ENCODE measurements at regions of chr16 and their contacts with region 1.

Region 1: DNA sequence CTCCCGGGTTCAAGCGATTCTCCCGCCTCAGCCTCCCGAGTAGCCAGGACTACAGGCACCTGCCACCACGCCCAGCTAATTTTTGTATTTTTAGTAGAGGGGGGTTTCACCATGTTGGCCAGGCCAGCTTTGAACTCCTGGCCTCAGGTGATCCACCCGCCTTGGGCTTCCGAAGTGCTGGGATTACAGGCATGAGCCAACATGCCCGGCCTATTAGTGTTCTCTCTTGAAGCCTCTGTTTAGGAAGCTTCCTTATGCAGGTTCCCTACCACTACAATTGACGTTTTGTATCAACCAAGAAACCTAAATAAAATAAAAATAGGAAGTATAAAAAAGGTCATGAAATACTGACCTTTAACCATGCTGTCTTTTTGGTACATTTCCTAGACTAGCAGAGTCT is 16.0 kb downstream of the CHST5 start:
- DNase-seq: no peak

Region 2: GRCh38 chr16:75372236-75372856 is 147.5 kb before region 1 on chr16:
- CTCF ChIA-PET with region 1: no interaction called
- POLR2A ChIA-PET with region 1: no interaction called
- DNase-seq: no peak

Region 3: DNA sequence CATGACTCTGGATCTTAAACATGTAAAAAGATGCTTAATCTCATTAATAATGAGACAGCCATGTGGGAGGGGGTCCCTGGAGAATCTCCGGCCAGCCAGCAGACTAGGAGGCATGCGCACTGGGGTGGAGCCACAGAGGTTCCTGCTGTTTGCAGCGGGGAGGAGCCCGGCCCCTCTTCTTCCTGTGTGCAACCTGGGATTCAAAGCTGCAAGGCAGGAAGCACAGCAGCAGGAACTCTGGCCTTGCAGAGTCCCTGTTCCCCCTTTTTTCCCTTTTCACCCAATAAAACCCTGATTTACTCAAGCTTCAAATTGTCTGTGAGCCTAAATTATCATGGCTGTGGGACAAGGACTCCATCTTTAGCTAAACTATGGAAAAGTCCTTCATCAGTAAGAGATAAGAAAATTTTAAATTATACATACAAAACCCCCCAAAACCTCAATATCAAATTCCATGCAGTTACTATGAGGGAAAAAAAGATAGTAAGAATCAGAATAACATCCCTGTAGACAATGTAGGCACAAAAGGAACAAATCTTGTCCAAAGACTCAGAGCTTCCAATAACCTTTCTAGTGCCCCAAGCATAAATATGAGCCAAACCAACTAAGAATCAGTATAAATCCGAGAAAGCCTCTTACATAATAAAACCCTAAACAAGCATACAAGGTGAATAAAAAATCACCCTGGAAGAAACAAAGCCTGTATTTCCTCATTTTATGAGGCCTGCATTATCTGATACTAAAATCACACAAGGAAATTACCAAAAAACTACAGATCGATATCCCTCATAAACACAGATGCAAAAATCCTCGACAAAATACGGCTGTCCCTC is 98.7 kb before region 1 on chr16:
- CTCF ChIA-PET with region 1: no interaction called
- POLR2A ChIA-PET with region 1: no interaction called
- DNase-seq: peak; percentile 45

Region 4: DNA sequence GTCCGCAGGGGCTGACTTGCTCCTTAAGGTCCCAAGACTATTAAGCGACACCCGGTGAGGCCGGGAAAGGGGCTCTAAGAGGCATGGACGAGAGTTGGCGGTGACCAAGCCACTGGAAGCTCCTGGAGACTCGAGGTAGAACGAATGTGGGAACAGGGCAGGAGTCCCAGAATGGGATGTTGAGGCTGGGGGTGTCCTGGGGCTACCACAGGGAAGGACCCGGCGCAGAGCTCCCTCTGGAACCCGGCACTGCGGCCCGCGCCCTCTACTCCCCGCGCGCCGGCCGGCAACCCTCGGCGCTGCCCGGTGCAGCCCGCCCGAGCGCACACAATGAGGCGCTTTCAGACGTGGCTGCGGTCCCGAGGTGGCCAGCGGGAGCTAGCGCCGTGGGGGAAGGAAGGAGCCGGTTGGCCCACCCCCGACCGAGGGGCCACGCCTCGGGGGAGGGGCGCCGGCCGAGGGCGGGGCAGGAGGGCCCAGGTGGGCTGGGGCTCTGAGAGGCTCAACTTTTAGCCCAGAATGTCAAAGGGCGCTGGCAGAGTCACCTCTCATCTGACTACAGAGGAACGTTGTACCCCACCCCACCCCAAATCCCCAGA is 24.7 kb before region 1 on chr16 and contains the start of gene CHST6:
- CTCF ChIA-PET with region 1: interaction called, 16 read pairs
- POLR2A ChIA-PET with region 1: interaction called, 11 read pairs
- DNase-seq: peak; percentile 57

Region 5: DNA sequence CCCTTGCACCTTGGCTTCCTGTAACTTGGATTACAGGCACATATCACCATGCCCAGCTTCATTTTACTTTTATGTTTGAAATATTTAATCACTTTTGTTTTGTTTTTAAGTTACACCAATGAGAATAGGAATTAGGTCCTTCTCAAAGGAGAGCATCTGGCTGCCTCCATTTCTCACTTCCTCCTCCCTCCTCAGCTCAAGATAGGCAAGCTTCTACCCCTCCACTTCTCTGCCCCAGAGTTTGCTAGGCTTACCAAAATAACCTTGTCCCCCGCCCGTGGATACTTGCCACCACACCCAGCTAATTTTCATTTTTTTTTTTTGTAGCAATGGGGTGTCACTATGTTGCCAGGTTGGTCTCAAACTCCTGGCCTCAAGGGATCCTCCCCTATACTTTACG is 64.2 kb after region 1 on chr16:
- CTCF ChIA-PET with region 1: no interaction called
- POLR2A ChIA-PET with region 1: no interaction called
- DNase-seq: no peak

Region 6: GRCh38 chr16:75695704-75696103 is 175.8 kb after region 1 on chr16:
- CTCF ChIA-PET with region 1: no interaction called
- POLR2A ChIA-PET with region 1: no interaction called
- DNase-seq: peak; percentile 15